Panc1 (cell line): ENCODE measurements at regions of chr17 and their contacts with region 1.

Region 1: DNA sequence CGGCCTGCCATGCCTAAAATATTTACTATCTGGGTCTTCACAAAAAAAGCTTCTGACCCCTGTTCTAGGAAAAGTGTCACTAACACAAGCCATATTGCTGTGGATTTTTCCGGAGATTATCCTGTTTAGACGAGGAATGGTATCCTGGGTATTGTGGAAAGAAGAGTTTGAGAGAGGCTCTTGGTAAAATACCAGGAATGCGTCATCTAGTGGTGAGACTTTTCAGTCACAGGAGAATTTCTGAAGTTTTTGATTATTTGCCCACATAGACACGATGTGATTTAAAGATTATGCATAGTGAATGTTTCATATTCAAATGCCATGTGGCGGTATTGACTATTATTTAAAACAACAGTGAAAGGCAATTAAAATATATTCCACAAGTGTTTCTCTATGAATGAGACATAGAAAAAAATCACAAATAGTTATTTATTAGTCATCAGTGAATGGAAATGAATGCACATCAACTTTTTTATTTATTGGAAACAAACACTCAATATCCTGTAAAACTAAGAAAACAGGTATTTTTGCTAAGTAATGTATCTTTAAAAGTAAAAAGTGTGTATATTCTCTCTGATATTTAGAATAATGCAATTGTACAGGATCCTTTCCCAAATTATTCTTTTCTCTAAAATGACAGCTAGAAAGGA is 7.8 kb downstream of the KRT28 start:
- DNase-seq: peak; percentile 4
- ATAC-seq: no peak
- H3K4me3 ChIP-seq: no peak overlapping the region
- H3K27ac ChIP-seq: no peak overlapping the region
- H3K4me1 ChIP-seq: no peaks in the 10 kb centered on the region
- H3K27me3 ChIP-seq: peaks cover 11% of the 10 kb centered on the region
- CTCF ChIP-seq: peak; percentile 74; the same call in 1 of the 2 replicates

Region 2: DNA sequence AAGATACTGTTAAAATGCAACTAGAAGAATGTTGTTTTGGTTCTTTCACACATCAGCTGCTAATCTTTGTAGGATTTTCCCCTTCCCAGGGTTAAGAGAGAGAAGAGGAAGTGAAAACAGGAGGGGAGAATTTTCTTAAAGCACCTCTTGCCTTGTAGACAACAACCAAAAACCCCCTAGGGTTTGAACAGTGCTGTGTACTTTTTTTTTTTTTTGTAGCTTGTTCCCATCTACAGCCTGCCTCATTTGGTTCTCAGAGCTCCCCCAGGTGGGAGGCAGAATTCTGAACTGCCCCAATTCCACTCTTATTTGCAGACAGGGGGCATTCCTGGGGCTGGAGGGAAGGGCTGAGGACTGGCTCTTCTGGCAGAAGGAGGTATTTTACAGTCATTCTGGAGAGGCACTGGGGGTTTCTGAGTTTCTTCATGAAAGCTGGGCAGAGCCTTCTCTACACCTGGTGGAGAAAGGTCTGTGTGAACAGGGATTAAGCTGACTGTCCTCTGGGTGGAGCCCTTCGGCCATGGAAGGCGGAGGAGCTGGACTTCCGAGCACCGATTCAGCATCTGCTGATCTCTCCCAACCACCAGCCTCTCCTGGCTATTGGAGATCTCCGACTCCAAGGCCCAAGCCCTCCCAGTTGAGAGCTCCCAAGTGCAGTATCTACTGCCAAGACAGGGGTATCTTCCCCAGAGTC is 176.5 kb before region 1 on chr17:
- CTCF ChIA-PET with region 1: interaction called, 3 read pairs
- POLR2A ChIA-PET with region 1: no interaction called
- in situ Hi-C with region 1: no loop called
- intact Hi-C with region 1: loop called (anchors 5 kb)
- DNase-seq: peak; percentile 20
- ATAC-seq: peak; percentile 87
- H3K4me3 ChIP-seq: no peak overlapping the region
- H3K27ac ChIP-seq: no peak overlapping the region
- H3K4me1 ChIP-seq: no peaks in the 10 kb centered on the region
- H3K27me3 ChIP-seq: peaks cover 16% of the 10 kb centered on the region
- CTCF ChIP-seq: peak; percentile 75